GM13977 (cell line): ENCODE measurements at regions of chr17 and their contacts with region 1.

Region 1: DNA sequence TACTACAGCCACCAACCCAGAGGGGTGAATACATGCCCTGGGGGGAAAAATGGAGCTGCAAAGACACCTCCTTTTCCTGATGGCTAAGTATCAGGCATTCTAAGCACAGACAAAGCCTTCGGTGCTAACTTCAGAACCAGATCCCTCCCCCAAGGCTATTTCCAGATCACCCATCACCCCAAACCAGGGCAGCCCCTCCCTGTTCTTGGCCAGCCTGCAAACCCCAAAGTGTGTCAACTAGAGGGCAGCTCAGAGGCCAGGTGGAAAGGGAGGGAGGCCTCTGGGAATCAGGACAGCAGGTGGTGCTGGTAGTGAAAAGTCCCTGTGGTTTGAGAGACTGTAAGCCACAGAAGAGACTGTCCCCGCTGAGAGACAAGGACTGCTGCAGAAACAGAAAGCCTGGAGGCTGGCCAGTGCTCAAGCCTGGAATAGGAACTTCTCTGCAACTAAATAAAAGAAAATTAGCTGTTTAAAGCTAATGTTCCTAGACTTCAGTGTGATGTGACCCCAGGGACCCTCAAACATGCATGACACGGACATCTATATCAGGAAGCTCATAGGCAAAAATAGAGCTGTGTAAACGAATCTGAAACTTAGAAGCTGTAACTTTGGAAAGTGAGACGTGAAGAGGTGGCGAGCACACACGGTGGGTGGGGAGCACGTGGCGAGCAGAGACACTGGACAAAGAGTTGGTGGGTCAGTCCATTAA is 9.1 kb downstream of the TUBG1 start:
- DNase-seq: peak; percentile 78
- CTCF ChIP-seq: peak; percentile 53

Region 2: DNA sequence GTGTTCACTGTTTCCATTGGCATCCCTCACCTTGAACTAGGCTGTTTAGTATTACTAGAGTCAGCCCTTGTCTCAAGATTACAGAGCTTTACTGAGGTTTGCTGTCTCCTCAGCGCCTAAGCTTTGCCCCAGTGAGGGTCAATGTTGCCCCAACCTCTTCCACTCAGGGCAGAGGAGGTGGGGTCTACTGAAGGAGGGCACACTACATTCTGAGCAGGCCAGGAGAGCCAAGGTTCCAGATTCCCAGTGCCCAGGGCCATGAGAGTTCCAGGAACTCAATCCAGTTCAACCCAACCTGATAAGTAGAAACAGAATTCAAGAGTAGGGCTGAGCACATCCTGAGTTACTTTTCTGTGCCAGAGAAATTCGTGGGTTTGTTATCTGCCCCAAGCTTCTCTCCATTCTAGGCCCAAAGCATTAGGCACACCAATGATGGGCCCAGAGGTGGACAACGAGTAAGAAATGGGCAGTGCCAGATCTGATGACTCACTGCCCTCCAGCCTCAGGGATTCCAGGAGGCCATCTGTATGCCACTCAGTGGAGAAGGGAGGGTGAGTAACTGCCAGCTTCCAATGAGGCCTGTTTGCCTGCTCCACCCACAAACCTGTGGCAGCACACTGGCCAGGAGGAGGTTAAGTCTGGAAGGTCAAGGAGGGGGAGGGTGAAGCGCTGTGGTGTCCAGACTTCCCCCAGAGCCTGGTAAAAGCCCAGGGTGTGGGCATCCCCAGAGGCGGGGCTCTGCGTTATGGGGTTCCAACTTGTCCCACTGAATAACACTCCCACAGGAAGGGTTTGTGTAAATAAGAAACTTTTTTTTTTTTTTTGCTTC is 48.7 kb after region 1 on chr17:
- in situ Hi-C with region 1: loop called (anchors 10 kb)
- DNase-seq: no peak
- CTCF ChIP-seq: no peak